OCI-LY7 (cell line): ENCODE measurements at regions of chr2 and their contacts with region 1.

Region 1: DNA sequence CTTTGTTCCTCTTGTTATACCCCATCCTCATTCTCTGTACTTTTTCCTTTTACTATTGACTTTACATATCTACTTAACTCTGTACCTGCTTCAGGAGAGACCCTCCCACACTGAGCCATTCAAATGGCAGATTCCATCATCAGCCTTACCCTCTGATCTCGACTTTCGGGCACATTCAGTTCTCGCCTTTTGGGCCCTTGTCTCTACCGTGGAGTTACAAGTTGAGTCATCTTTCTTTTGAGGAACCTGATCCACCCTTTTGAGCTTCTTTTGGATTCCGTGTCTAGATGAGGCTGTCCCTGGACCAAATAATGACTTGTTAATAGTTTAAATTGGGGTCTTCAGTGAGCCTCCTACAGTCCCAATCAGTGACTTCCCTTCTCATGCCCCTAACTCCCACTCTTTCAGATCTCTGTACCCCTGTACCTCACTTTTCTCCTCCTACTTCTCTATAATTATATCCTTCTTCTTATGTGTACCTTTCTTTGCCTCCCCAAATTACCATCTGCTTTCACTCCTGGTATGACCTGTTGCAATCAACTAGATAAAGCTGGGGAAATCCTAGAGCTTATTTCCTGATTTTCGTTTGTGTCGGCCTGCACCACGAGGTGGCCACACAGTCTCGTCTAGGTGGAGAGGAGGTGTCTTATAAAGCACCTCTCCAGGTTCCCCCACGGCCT is 17.2 kb downstream of the SP110 start:
- DNase-seq: peak; percentile 74
- H3K4me3 ChIP-seq: no peak overlapping the region
- H3K27ac ChIP-seq: no peak overlapping the region
- H3K4me1 ChIP-seq: peaks cover 47% of the 10 kb centered on the region
- CTCF ChIP-seq: peak; percentile 84

Region 2: DNA sequence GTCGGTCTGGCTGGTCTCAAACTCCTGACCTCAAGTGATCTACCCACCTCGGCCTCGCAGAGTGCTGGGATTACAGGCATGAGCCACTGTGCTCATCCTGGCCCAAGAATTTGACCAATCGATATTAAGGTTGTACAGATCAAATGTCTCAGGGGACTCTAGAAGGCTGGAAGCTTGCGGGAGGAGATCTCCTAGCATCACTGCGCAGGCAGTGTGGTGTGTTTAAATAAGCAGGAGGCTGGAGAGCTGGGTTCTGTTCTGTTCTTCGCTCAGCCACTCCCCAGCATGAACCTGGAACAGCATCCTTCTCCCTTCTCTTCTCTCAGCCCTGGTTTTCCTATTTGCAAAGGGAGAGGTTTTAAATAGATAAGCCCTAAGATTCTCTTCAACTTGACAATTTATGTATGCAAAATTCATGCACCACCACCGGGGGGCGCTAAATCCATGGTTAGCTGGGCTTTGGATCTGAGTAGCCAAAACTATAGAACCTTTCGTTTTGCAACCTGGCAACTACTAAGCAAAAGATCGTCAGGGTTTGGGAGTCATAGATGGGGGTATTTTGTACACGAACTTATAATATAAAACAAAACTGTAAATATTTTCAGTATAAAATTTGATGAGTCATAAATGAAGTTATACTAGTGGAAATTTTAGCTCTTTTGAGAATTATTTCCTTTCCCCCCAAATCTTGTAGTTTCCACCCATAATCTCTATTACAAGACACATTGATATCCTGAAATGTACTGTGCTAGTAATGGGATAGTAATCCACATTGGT is 194.5 kb before region 1 on chr2:
- CTCF ChIA-PET with region 1: no interaction called
- POLR2A ChIA-PET with region 1: no interaction called
- intact Hi-C with region 1: loop called (anchors 5 kb)
- DNase-seq: peak; percentile 62
- H3K4me3 ChIP-seq: no peak overlapping the region
- H3K27ac ChIP-seq: no peak overlapping the region
- H3K4me1 ChIP-seq: no peaks in the 10 kb centered on the region
- CTCF ChIP-seq: peak; percentile 94

Region 3: DNA sequence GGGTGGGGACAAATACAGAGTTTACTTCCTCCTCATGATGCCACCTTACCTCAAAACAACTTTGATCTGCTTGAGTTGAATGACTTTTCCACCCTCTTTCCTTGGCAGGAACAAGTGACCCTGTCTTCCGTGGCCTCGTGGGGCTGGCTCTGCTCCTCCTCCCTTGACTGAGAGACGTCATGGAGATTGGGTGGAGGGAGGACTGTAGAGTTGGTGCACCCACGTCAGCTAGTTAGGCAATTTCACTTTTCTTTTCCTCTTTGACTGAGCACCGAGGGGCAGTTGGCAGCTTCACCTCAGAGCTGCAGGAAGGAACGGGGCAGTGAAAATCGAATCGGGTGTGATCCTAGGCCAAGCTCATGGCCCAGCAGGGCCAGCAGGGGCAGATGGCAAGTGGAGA is 22.9 kb after region 1 on chr2 and contains the start of gene SP140:
- CTCF ChIA-PET with region 1: no interaction called
- POLR2A ChIA-PET with region 1: interaction called, 41 read pairs
- intact Hi-C with region 1: loop called (anchors 1 kb)
- DNase-seq: peak; percentile 57
- H3K4me3 ChIP-seq: peak within 1 kb of the TSS; percentile 51
- H3K27ac ChIP-seq: peak within 1 kb of the TSS; percentile 69
- H3K4me1 ChIP-seq: peaks cover 54% of the 10 kb centered on the region
- CTCF ChIP-seq: no peak
- total RNA-seq, gene SP140: 4.3 and 4.8 TPM in 2 replicates

Region 4: GRCh38 chr2:230416061-230416721 is 213.6 kb after region 1 on chr2 and contains the start of gene SP100:
- CTCF ChIA-PET with region 1: no interaction called
- POLR2A ChIA-PET with region 1: interaction called, 6 read pairs
- intact Hi-C with region 1: loop called (anchors 2 kb)
- DNase-seq: peak; percentile 91
- H3K4me3 ChIP-seq: peak within 1 kb of the TSS; percentile 72
- H3K27ac ChIP-seq: peak within 1 kb of the TSS; percentile 91
- H3K4me1 ChIP-seq: peaks cover 44% of the 10 kb centered on the region
- CTCF ChIP-seq: no peak
- total RNA-seq, gene SP100: 44.6 and 60.5 TPM in 2 replicates

Region 5: DNA sequence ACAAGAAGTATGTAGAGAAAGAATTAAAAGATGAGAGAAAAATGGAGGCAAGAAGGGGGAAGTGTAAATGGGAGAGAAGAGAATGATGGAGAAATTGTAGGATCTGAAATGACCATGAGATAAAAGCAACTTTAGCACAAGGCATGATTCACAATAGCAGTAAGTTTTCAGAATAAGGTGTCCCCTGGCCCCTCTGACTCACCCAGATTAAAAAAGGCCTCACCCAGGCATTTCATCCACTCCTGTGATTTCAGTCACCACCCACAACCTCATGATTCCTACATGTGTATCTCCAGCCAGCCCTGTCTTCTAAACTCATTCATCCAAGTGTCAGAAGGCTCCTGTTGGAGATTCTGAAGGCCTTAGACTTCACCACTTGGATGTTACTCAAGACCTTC is 270.1 kb after region 1 on chr2:
- CTCF ChIA-PET with region 1: no interaction called
- POLR2A ChIA-PET with region 1: interaction called, 4 read pairs
- intact Hi-C with region 1: loop called (anchors 1 kb)
- DNase-seq: peak; percentile 32
- H3K4me3 ChIP-seq: no peak overlapping the region
- H3K27ac ChIP-seq: peak overlapping the region; percentile 88
- H3K4me1 ChIP-seq: peaks cover 42% of the 10 kb centered on the region
- CTCF ChIP-seq: no peak

Region 6: DNA sequence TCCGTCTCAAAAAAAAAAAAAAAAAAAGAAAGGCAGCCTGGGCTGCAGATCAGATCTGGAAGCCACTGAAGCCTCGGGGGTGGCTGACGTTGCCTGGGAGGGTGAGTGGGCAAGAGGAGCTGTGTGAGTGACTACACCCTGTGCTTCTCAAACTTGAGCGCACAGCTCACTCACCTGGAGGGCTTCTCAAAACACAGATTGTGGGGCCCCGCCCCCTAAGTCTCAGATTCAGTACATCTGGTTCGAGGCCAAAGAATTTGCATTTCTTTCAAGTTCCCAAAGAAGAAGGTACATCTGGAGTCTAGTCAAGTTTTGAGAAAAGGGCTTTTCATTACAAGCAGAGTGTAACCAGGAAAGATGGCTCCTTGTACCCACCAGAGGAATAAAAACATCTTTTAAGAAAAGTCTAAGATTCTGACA is 412.4 kb after region 1 on chr2:
- CTCF ChIA-PET with region 1: interaction called, 3 read pairs
- POLR2A ChIA-PET with region 1: interaction called, 3 read pairs
- intact Hi-C with region 1: loop called (anchors 1 kb)
- DNase-seq: peak; percentile 96
- H3K4me3 ChIP-seq: peak overlapping the region; percentile 45
- H3K27ac ChIP-seq: peak overlapping the region; percentile 57
- H3K4me1 ChIP-seq: peaks cover 26% of the 10 kb centered on the region
- CTCF ChIP-seq: peak; percentile 26; the same call in 1 of the 2 replicates

Region 7: DNA sequence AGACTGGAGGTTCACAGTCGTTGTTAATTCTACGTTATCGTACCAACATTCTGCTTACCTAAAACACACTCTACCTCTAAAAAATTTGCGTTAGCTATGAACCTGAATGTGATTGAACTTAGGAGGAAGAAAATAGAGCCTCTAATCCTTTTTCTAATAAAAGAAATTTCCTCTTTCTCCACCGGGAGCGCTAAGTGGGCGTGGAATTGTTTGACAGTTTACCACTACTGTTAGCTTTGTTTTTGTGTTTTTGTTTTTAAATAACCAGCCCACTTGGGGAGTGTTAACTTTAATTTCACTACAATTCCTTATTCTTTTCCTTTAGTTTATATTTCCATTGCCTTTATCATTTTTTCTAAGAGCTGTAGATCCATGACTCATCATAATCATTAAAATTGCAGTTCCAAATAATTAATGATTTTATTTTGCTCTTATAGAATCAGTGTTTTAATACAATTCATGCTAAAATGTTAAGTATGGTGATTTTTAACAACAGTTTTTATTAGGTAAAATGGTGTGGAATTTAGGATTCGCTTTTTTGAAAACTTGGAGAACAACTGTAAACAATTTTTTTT is 607.2 kb after region 1 on chr2:
- CTCF ChIA-PET with region 1: no interaction called
- POLR2A ChIA-PET with region 1: no interaction called
- intact Hi-C with region 1: loop called (anchors 10 kb)
- DNase-seq: no peak
- H3K4me3 ChIP-seq: no peak overlapping the region
- H3K27ac ChIP-seq: no peak overlapping the region
- H3K4me1 ChIP-seq: peaks cover 7% of the 10 kb centered on the region
- CTCF ChIP-seq: peak; percentile 65